ENCODE measurements at regions of chr16 and their contacts with region 1.

Region 1: GRCh38 chr16:22190776-22191531 is 15.1 kb upstream of the EEF2K start:
- DNase-seq: peak; percentile 99
- H3K4me3 Mint-ChIP-seq: peak overlapping the region; percentile 83
- H3K27ac Mint-ChIP-seq: peak overlapping the region; percentile 98
- H3K4me1 Mint-ChIP-seq: peaks cover 60% of the 10 kb centered on the region
- H3K27me3 Mint-ChIP-seq: no peaks in the 10 kb centered on the region

Region 2: DNA sequence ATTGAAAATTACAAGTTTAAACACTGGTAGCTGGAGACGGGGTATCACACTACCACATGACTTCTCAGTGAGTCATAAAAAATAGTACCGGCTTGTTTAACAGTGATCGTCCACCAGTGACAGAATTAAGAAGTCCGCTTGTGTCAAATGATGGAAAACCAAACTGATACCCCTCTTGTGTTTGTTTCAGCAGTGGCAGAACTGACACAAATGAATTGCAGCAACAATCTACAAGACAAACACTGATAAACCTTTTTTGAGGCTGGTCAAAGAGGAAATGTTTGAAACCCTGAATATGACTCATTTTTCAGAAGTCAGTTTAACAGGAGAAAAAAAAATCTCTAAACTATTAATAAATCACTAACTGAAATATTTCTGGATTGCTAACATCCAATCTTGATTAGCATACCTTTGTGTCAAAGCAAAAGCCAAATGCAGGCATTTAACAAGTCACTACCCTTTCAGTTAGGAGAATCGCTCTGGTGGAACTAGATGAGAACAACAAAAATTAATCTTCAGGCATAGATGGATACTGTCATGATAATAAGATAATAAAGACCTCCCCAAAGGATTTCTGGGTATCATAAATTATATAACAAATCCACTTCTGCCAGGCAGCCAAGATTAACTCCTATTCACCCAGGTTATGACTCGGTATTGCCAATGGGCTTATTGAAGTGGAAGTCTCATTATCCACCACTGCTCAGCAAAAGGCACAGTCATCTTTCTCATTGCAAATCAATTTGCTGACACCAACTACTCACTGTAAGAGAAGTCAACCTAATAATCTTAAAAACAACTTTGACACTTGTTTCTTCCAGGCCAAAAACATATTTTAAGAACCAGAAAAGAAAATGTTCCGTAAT is 1311.5 kb before region 1 on chr16:
- CTCF ChIA-PET with region 1: no interaction called
- intact Hi-C with region 1: loop called (anchors 10 kb)
- DNase-seq: no peak
- H3K4me3 Mint-ChIP-seq: no peak overlapping the region
- H3K27ac Mint-ChIP-seq: no peak overlapping the region
- H3K4me1 Mint-ChIP-seq: peaks cover 41% of the 10 kb centered on the region
- H3K27me3 Mint-ChIP-seq: no peaks in the 10 kb centered on the region

Region 3: GRCh38 chr16:21599233-21600030 is 591.5 kb before region 1 on chr16 and contains the start of gene METTL9:
- CTCF ChIA-PET with region 1: no interaction called
- intact Hi-C with region 1: loop called (anchors 5 kb)
- DNase-seq: peak; percentile 95
- H3K4me3 Mint-ChIP-seq: peak within 1 kb of the TSS; percentile 86
- H3K27ac Mint-ChIP-seq: peak within 1 kb of the TSS; percentile 87
- H3K4me1 Mint-ChIP-seq: peaks cover 57% of the 10 kb centered on the region
- H3K27me3 Mint-ChIP-seq: no peaks in the 10 kb centered on the region
- total RNA-seq, gene METTL9: 82.5 to 85.1 TPM

Region 4: DNA sequence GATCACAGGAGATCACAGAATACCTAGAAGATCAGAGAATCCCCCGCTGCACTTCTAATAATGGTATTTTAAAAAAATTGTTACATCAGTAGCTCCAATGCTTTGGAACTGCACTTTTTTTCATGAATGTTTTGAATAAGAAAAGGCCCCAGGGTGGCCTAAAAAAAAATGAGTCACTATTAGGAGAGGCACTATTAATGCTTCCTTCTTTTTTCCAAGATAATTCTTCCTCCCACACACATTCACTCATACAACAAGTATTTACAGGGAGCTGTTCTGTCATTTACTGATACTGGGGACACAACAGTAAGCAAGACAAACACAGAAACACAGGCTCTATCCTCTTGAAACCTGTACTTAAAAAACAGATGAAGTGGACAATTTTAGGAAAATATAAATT is 189.4 kb before region 1 on chr16:
- CTCF ChIA-PET with region 1: interaction called, 58 read pairs
- intact Hi-C with region 1: loop called (anchors 1 kb)
- DNase-seq: no peak
- H3K4me3 Mint-ChIP-seq: no peak overlapping the region
- H3K27ac Mint-ChIP-seq: no peak overlapping the region
- H3K4me1 Mint-ChIP-seq: peaks cover 7% of the 10 kb centered on the region
- H3K27me3 Mint-ChIP-seq: no peaks in the 10 kb centered on the region

Region 5: GRCh38 chr16:22098405-22099255 is 92.3 kb before region 1 on chr16:
- CTCF ChIA-PET with region 1: interaction called, 13 read pairs
- intact Hi-C with region 1: loop called (anchors 2 kb)
- DNase-seq: no peak
- H3K4me3 Mint-ChIP-seq: peak overlapping the region; percentile 28
- H3K27ac Mint-ChIP-seq: no peak overlapping the region
- H3K4me1 Mint-ChIP-seq: no peaks in the 10 kb centered on the region
- H3K27me3 Mint-ChIP-seq: peaks cover 5% of the 10 kb centered on the region

Region 6: GRCh38 chr16:22353191-22353919 is 162.4 kb after region 1 on chr16:
- CTCF ChIA-PET with region 1: no interaction called
- intact Hi-C with region 1: loop called (anchors 5 kb)
- DNase-seq: peak; percentile 55
- H3K4me3 Mint-ChIP-seq: peak overlapping the region; percentile 18
- H3K27ac Mint-ChIP-seq: peak overlapping the region; percentile 96
- H3K4me1 Mint-ChIP-seq: peaks cover 55% of the 10 kb centered on the region
- H3K27me3 Mint-ChIP-seq: no peaks in the 10 kb centered on the region

Measured in activated naive CD4-positive, alpha-beta T cell treated with anti-CD3 and anti-CD28 coated beads for 36 hours (primary cell).